Posterior cingulate gyrus (tissue), 11 donors: ENCODE measurements at regions of chr13 and their contacts with region 1.

Region 1: GRCh38 chr13:27251166-27252091 is at the start of gene RPL21:
- DNase-seq: peak; percentile 88 to 99 (median 96)

Region 2: DNA sequence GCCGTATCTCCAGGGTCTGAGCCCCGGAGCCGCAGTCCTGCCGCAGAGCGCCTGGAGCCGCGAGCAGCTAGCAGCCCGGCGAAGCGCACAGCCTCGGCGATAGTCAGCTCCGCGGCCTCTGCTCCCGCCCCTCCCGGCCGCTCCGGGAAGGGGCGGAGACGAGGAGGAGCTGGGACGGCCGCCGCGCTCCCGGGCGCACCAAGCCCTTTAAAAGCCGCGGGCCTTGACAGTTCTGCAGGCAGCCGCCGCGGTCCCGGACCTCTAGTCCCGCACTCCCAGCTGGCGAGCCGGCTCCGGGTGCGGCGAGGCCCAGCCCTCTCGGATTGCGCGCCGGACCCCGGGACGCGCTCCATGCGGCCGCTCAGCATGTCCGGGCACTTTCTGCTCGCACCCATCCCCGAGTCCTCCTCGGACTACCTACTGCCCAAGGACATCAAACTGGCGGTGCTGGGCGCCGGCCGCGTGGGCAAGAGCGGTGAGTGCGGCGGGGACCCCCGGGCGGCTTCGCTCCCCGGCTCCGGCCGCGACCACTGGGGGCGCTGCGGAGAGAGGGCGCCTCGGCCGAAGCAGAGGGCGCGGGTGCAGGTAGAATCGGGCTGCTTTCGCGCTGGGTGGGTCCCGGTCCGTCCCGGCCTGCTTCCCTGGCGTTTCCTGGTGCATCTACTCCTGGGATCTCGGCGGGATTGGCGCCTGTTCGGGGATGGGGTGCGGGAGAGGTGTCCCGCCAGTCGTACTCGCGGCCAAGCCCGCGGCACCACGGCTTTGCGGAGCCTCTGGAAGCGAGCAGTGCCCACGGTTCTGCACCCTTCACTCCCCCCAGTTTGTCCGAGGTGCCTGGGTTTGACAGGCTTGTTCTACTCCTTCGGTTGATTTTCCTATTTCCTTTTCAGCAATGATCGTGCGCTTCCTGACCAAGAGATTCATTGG is 19.4 kb after region 1 on chr13 and contains the start of gene RASL11A:
- intact Hi-C with region 1: loop called (anchors 2 kb)
- DNase-seq: peak; percentile 73 to 98 (median 82)